Kidney (tissue), 22 donors: ENCODE measurements at regions of chr7 and their contacts with region 1.

Region 1: DNA sequence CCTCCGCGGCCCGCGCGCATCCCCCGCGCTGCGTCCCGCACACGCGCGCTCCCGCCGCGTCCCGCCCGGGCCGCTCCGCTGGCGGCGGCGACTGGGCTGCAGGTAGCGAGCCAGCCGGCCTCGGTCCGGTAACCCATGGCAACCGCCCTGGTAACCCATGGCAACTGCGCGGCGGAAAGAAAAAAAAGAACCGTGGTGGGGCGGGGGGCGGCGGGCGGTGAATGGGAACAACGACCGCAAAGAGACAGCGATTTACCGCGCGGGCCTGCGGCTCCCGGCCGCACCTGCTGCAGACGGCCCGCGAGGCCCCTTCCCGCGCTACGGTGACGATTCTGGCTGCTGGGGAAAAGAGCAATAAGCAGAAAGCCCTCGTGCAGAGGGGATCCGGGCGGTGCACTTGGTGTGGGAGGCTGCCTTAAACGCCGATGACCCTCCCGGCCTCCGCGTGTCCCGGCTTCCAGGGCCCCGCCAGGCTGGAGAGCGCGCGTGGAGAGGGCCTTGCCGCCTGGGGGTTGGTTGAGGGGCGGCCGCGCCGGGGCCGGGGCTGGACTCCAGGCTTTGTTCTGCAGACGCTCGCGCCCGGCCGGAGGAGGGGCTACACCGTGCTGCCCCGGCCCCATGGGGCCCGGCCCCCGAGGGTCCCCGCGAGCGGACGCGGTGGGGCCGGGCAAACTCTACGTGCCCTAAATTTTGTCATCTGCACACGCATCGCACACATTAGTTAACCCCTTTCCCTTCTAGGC is 84.7 kb downstream of the SNX10 start:
- DNase-seq: peak; percentile 85 to 95 (median 92)
- H3K4me3 ChIP-seq: peak overlapping the region; percentile 61 to 66 (median 62)
- H3K27ac ChIP-seq: peak overlapping the region; percentile 79 to 89
- H3K4me1 ChIP-seq: no peaks in the 10 kb centered on the region
- H3K27me3 ChIP-seq: peaks cover 10% of the 10 kb centered on the region
- CTCF ChIP-seq: no peak

Region 2: GRCh38 chr7:26490650-26491624 is 114.6 kb after region 1 on chr7:
- intact Hi-C with region 1: no loop called
- DNase-seq: peak in 1 of 5 donors; percentile 43
- H3K4me3 ChIP-seq: no peak overlapping the region
- H3K27ac ChIP-seq: no peak overlapping the region
- H3K4me1 ChIP-seq: peaks cover 0 to 4% (median 0%) of the 10 kb centered on the region in 3 donors
- H3K27me3 ChIP-seq: no peaks in the 10 kb centered on the region
- CTCF ChIP-seq: no peak

Region 3: GRCh38 chr7:26667500-26668133 is 291.3 kb after region 1 on chr7:
- intact Hi-C with region 1: loop called (anchors 10 kb)
- DNase-seq: peak; percentile 54 to 99 (median 94)
- H3K4me3 ChIP-seq: no peak overlapping the region
- H3K27ac ChIP-seq: no peak overlapping the region
- H3K4me1 ChIP-seq: peaks cover 0 to 2% (median 0%) of the 10 kb centered on the region in 3 donors
- H3K27me3 ChIP-seq: peaks cover 2% of the 10 kb centered on the region
- CTCF ChIP-seq: peak; percentile 88

Region 4: DNA sequence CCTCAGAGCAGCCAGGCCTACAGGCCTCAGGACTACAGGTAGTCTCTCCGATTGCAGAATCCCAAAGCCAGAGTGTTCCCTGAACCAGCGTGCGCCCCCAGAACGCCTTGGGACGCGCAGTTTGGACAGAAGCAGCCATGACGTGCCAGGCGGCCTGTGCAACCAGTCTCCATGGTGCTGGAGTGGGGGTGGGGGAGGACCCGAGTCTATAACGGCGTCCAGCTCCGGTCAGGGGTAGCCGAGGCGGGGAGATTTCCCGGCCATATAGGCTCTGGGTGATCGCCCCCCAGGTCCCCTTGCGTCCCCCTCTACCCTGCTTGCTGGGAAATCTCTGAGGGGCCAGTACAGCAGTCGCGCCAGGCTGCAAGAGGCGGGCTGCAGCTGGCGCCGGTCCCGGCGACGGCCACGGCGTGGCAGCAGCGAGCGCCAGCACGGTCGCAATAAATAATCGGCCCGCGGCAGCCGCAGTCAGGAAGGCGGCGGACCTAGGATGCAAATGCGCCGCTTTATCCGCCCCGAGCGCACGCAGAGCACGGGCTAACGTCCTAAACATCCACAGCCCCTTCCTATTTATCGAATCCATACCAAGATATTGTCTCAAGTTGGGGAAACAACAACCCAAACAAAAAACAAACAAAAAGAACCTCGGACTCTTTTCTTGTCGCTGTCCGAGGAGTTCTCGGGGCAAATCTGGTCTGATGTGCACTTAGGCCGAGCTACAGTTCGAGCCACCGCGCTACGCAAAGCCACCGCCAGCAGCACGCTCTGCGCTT is 774.4 kb after region 1 on chr7:
- intact Hi-C with region 1: loop called (anchors 10 kb)
- DNase-seq: peak; percentile 87 to 94 (median 92)
- H3K4me3 ChIP-seq: peak overlapping the region; percentile 56 to 87 (median 83)
- H3K27ac ChIP-seq: peak overlapping the region; percentile 97 to 98
- H3K4me1 ChIP-seq: peaks cover 0 to 24% (median 20%) of the 10 kb centered on the region in 3 donors
- H3K27me3 ChIP-seq: no peaks in the 10 kb centered on the region
- CTCF ChIP-seq: peak; percentile 87